ENCODE measurements at regions of chr18 and their contacts with region 1.

Region 1: DNA sequence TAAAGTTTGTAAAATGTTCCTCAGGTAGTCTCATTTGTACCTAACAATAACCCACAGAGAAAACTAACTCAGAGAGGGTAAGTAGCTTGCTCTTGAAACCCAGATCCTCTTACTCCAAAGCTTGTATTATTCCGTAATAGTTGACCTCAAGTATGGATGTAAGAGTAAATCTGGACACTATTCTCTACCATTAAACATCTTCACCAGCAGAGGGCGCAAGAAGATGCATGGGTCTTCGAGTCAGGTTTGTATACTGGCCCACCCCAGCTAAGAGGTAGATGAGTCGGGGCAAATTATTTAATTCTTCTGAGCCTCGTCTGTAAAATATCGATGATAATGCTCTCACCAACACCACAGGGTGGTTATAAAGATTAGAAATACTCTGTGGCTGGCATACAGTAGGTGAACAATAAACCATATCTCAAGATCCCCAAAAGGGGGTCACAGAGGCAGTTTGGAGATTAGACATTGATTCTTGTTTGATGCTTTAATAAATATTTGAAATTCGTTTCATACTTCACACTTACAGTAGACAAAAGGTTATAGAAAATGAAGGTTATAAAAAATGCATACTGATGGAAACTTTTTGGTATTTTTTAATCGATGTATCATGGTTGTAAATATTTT is 3.5 kb upstream of the CABLES1 start:
- DNase-seq: peak; percentile 66 to 75
- H3K4me3 ChIP-seq: no peak overlapping the region
- H3K4me3 Mint-ChIP-seq: no peak overlapping the region
- H3K27ac Mint-ChIP-seq: no peak overlapping the region
- H3K4me1 ChIP-seq: peaks cover 35% of the 10 kb centered on the region
- H3K4me1 Mint-ChIP-seq: peaks cover 14% of the 10 kb centered on the region
- H3K27me3 ChIP-seq: no peaks in the 10 kb centered on the region
- H3K27me3 Mint-ChIP-seq: no peaks in the 10 kb centered on the region
- CTCF ChIP-seq: peak; percentile 55 to 78

Region 2: DNA sequence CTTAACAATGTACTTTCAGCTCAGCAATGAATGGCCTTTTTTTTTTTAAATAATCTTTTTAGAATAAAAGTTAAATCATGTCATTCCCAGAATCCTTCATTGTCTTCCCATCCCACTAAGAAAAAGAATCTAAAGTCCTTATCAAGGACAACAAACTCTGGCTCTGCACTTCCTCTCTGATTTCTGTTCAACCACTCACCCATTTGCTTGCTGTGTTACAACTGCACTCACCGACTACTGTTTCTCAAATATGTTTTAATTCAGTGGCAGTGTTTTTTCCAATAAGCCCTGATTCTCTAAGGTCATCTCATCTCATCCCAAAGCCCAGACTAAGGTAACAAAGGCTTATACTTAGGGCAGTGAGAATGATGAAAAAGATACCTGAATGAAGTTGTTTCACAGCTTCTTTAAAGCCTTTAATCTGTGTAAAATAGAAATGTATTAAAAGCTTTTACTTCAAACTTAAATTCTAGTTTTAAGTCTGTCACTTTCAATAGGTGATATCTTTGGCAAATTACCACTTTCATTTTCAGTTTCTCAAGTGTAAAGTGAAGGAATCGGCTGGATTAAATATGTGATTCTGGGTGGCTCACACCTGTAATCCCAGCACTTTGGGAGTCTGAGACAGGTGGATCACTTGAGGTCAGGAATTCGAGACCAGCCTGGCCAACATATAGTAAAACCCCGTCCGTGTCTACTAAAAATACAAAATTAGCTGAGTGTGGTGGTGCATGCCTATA is 111.1 kb before region 1 on chr18:
- CTCF ChIA-PET with region 1: no interaction called
- POLR2A ChIA-PET with region 1: interaction called, 12 read pairs
- intact Hi-C with region 1: no loop called
- DNase-seq: no peak
- H3K4me3 ChIP-seq: no peak overlapping the region
- H3K4me3 Mint-ChIP-seq: no peak overlapping the region
- H3K27ac Mint-ChIP-seq: no peak overlapping the region
- H3K4me1 ChIP-seq: no peaks in the 10 kb centered on the region
- H3K4me1 Mint-ChIP-seq: no peaks in the 10 kb centered on the region
- H3K27me3 ChIP-seq: no peaks in the 10 kb centered on the region
- H3K27me3 Mint-ChIP-seq: no peaks in the 10 kb centered on the region
- CTCF ChIP-seq: no peak

Region 3: DNA sequence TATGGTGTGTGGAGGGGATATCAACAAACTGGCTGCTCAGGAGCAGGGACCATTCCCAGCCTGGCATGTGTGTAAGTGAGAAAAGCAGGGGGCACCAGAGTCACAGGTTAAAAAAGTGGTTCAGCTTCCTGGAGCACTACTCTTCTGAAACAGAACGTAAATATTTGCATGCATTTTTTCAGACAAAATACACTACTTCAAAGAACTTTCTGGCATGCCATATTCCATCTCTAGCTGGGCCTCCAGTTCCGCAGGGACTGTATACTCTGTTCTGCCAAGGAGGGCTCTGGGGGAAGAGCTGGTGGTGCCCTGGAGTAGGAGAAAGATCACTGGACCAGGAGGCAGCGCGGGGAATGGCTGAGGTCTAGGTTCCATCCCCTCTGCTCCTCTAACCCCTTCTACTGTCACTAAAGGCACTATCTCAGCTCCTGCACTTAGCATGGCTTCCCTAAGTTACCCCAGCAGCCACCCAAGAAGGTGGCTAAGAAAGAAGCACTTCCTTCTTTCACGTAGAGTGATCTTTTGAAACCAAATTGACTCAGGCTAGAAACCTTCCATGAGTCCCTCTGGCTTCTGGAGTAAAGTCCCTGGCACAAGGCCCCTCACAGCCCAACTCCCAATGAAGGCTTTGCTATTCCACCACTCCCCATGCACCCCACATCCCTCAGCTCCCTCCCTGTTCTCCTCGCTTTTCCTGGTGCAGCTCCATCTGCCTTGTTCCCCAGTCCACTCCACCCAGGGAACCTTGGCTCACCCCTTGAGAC is 54.1 kb before region 1 on chr18:
- CTCF ChIA-PET with region 1: interaction called, 11 read pairs
- POLR2A ChIA-PET with region 1: interaction called, 5 read pairs
- intact Hi-C with region 1: loop called (anchors 1 kb)
- DNase-seq: peak; percentile 77 to 81
- H3K4me3 ChIP-seq: no peak overlapping the region
- H3K4me3 Mint-ChIP-seq: peak overlapping the region; percentile 7
- H3K27ac Mint-ChIP-seq: peak overlapping the region; percentile 50
- H3K4me1 ChIP-seq: peaks cover 9% of the 10 kb centered on the region
- H3K4me1 Mint-ChIP-seq: peaks cover 19% of the 10 kb centered on the region
- H3K27me3 ChIP-seq: no peaks in the 10 kb centered on the region
- H3K27me3 Mint-ChIP-seq: no peaks in the 10 kb centered on the region
- CTCF ChIP-seq: peak; percentile 45 to 70

Region 4: DNA sequence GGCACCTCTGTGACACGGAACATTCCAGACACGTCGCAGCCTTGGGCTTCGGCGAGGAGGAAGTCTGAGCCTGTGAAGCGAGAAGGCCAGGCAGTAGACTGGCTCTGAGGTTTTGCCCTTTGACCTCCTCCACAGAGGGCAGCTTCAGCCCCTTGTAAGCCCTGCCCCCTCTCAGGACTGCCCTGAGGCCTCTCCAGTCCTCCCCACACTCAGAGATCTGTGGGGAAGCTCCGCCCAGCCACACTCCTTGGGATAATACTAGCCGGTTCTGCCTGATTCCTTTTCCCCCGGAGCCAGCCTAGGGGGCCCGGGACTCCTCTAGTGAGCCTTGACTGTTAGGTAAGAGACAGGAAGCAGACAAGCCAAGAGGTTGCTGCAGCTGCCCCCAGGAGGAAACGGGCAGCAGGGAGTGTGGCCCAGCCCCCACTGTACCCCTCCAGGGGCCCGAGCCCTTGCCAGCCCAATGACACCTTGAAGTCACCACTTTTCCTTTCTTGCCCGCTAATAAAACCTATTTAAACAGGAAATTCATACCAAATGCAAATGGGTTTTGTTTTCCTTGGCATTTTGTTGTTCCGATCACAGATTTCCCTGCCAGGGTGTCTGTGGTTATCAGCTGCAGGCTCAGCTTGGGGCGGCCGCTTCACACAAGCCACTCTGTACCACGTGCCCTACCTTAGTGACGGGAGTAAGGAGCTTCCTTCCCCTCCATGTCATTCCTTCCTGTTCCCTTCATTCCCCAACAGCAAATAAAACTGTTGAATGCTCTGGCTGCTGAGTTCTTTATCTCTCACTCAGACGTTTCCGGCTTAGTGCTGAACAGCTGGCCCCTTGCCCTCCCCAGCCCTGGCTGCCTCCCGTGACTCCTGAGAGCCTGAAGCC is 128.1 kb after region 1 on chr18:
- CTCF ChIA-PET with region 1: no interaction called
- POLR2A ChIA-PET with region 1: no interaction called
- intact Hi-C with region 1: loop called (anchors 5 kb)
- DNase-seq: peak; percentile 90 to 95
- H3K4me3 ChIP-seq: peak overlapping the region; percentile 9; the same call in 1 of the 2 replicates
- H3K4me3 Mint-ChIP-seq: peak overlapping the region; percentile 75
- H3K27ac Mint-ChIP-seq: peak overlapping the region; percentile 95
- H3K4me1 ChIP-seq: peaks cover 18% of the 10 kb centered on the region
- H3K4me1 Mint-ChIP-seq: peaks cover 9% of the 10 kb centered on the region
- H3K27me3 ChIP-seq: no peaks in the 10 kb centered on the region
- H3K27me3 Mint-ChIP-seq: no peaks in the 10 kb centered on the region
- CTCF ChIP-seq: no peak

Region 5: GRCh38 chr18:23412351-23412964 is 280.7 kb after region 1 on chr18:
- CTCF ChIA-PET with region 1: interaction called, 7 read pairs
- POLR2A ChIA-PET with region 1: no interaction called
- intact Hi-C with region 1: loop called (anchors 2 kb)
- DNase-seq: no peak
- H3K4me3 ChIP-seq: no peak overlapping the region
- H3K4me3 Mint-ChIP-seq: no peak overlapping the region
- H3K27ac Mint-ChIP-seq: no peak overlapping the region
- H3K4me1 ChIP-seq: no peaks in the 10 kb centered on the region
- H3K4me1 Mint-ChIP-seq: no peaks in the 10 kb centered on the region
- H3K27me3 ChIP-seq: no peaks in the 10 kb centered on the region
- H3K27me3 Mint-ChIP-seq: no peaks in the 10 kb centered on the region
- CTCF ChIP-seq: no peak